Adrenal gland (tissue), 19 donors: ENCODE measurements at regions of chr15 and their contacts with region 1.

Region 1: DNA sequence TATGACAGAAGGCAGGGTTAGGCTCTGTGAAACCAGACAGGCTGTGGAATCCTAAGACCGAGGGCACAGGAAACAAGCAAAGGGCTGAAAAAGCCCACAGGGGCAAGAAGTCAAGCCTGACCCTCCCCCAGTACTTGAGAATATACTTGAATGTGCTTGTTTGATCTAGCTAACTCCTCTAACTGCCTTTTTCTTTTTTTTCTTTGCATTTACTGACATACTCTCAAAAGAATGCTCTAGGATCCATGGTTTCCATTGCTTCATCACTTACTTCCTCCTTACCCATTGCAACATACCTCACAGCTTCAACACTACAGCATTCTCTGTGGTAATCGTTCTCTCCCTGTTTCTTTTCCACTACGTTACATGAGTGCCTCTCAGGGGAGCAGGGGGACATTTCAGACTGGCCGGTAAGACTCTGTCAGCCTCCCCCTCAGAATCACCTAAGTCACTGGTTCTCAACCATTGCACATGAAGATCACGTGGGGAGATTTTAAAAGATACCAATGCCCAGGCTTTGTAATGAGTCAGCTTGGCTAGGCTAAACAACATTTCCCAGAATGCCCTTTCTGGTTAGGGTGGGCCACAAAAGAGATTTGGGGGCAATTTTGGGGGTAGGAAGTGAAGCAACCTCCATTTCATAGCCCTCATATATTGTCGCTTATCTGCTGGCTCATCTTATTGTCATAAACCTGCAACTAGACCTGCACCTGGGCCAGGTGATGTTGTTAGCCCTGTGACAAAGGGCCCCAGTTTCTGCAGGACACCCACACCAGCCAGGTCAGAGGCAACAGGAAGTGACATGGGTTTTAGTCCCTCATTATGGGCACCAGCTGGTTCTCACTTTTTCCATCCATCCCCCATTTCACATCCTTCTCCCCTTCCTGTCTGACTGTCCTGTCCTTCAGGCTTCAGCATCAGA is 24.6 kb upstream of the RSL24D1 start:
- DNase-seq: peak in 3 of 7 donors; percentile 26 to 32 (median 27)
- H3K4me3 ChIP-seq: no peak overlapping the region
- H3K27ac ChIP-seq: peak overlapping the region in 2 of 5 donors; percentile 53 to 74
- H3K4me1 ChIP-seq: peaks cover 0 to 5% of the 10 kb centered on the region in 2 donors
- H3K27me3 ChIP-seq: no peaks in the 10 kb centered on the region
- CTCF ChIP-seq: no peak
- POLR2A ChIP-seq: no peak

Region 2: DNA sequence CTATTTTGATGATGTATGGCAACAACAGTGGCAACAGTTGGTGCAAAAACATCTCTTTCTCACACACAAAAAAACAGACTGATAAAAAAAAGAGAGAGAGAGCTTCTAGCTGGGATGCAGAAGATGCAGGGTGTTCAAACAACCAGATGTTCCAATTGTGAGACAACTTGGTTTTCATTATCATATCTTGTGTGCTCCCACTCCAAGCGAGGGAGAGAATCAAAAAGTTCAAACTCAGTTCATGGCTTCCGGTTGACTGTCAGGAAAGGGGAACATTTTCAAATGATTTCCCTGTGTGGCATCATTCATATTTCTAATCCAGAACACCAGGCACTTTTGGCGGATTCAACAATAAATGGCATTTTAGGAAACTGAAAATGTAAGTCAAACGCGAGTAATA is 96.7 kb before region 1 on chr15:
- intact Hi-C with region 1: no loop called
- DNase-seq: peak in 1 of 7 donors; percentile 15
- H3K4me3 ChIP-seq: no peak overlapping the region
- H3K27ac ChIP-seq: no peak overlapping the region
- H3K4me1 ChIP-seq: no peaks in the 10 kb centered on the region
- H3K27me3 ChIP-seq: no peaks in the 10 kb centered on the region
- CTCF ChIP-seq: no peak
- POLR2A ChIP-seq: no peak

Region 3: DNA sequence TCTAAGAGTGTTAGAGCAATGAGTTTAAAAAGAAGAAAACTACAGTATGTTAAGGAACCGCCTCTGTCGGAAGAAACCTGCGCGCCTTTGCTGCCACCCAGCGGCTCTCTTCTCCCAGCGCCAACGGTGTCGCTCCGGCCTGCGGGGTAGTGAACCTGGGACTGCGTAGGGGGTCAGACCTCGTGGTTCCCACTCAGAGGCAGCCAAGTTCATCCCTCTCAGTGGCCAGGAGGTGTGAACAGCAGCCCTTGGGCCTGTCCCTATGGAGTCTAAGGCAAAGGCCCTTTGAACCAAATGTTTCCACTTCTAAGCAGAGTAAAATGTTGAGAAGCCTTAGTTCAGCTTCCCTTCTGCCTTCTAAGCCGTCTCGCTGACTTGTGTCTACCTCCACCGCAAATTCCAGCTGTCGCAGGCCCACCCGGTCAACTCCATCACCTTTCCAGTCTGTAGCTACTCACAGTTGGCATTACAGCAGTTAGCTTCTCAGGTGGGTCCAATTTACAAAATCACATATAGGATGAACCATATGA is 69.2 kb after region 1 on chr15:
- intact Hi-C with region 1: loop called (anchors 2 to 5 kb)
- DNase-seq: peak; percentile 83 to 92 (median 88)
- H3K4me3 ChIP-seq: peak overlapping the region in 2 of 4 donors; percentile 75 to 87
- H3K27ac ChIP-seq: peak overlapping the region; percentile 83 to 94 (median 87)
- H3K4me1 ChIP-seq: peaks cover 0 to 15% of the 10 kb centered on the region in 2 donors
- H3K27me3 ChIP-seq: no peaks in the 10 kb centered on the region
- CTCF ChIP-seq: peak; percentile 71 to 96 (median 90)
- POLR2A ChIP-seq: no peak